ENCODE measurements at regions of chr12 and their contacts with region 1.

Region 1: DNA sequence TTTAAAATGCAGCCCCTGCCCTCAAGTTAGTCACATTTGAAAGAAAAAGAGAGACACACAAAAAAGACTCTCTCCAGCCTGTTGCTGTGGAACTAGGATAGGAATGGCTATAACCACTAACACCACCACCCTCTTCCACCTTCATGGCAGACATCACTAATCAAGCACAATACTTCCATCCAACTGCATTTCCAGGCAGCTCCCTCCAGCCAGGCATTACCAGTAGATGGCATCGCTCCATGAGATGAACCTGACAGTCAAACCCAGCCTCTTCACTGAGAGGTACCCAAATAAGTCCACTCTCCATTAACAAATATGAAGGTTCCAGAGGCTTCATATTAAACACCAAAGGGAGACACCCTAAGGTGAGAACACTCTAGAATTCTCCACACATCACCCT is 24.4 kb downstream of the SLC8B1 start:
- DNase-seq: no peak
- H3K4me3 ChIP-seq: no peak overlapping the region
- CTCF ChIP-seq: no peak

Region 2: DNA sequence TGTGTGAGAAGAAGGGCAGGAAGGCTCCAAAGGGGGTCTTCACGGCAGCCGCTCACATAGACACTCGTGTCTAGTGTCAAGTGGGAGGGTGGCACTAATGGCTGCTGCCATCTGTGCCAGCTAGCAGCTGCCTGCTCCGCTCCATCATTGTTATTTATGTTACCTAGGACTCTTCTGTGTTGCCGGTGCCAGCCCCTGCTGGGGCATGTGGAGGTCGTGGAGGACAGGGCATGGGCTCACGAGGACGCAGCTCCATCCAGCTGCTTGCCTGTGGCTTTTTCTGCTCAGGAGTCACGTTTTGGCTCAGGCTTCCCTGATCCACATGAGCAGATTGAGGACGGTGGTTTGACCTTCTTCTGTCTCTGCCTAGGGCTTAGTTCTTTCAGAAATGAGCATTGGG is 58.0 kb before region 1 on chr12:
- CTCF ChIA-PET with region 1: no interaction called
- POLR2A ChIA-PET with region 1: no interaction called
- DNase-seq: no peak
- H3K4me3 ChIP-seq: no peak overlapping the region
- CTCF ChIP-seq: no peak

Region 3: GRCh38 chr12:113299619-113300237 is 10.8 kb before region 1 on chr12:
- CTCF ChIA-PET with region 1: interaction called, 24 read pairs
- POLR2A ChIA-PET with region 1: no interaction called
- DNase-seq: peak; percentile 7
- H3K4me3 ChIP-seq: no peak overlapping the region
- CTCF ChIP-seq: no peak

Region 4: DNA sequence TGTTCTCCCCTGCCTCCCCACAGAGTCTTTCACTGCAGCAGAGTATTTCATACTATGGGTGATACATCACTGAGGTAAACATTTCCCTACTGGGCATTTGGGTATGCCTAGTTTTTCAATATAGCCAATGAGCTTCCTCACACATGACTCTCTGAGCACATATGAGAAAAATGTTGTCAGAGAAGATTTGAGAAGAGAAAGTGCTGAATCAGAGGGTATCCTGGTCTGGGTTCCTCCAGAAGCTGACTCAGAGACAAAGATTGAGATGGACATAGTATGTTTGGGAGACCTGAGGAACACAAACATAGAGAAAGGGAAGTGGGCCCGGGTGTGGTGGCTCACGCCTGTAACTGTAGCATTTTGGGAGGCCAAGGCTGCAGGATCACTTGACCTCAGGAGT is 11.9 kb after region 1 on chr12:
- CTCF ChIA-PET with region 1: interaction called, 36 read pairs
- POLR2A ChIA-PET with region 1: no interaction called
- DNase-seq: peak; percentile 54
- H3K4me3 ChIP-seq: no peak overlapping the region
- CTCF ChIP-seq: no peak

Region 5: DNA sequence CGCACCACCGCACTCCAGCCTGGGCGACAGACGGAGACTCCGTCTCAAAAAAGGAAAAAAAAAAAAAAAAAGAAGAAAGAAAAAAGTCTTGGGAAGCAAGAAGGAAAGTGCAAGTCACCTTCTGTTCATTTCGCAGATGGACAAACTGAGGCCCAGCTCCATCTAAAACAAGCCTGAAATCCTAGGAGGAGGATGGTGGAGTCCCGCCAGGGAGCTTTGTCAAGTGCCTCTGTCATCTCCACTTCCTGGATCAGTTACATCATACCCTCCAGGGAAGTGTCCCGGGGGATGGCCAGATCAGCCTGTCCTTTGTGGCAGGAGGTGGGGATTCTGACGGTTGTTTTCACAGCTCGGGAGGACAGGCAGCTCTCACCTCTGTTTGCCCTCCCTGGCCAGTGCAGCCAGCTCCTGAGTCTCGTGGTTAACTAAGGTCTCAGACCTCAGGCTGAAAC is 103.0 kb after region 1 on chr12:
- CTCF ChIA-PET with region 1: no interaction called
- POLR2A ChIA-PET with region 1: no interaction called
- DNase-seq: no peak
- H3K4me3 ChIP-seq: no peak overlapping the region
- CTCF ChIP-seq: no peak

Measured in AG04449 (cell line).